Posterior cingulate gyrus (tissue), 11 donors: ENCODE measurements at regions of chr10 and their contacts with region 1.

Region 1: DNA sequence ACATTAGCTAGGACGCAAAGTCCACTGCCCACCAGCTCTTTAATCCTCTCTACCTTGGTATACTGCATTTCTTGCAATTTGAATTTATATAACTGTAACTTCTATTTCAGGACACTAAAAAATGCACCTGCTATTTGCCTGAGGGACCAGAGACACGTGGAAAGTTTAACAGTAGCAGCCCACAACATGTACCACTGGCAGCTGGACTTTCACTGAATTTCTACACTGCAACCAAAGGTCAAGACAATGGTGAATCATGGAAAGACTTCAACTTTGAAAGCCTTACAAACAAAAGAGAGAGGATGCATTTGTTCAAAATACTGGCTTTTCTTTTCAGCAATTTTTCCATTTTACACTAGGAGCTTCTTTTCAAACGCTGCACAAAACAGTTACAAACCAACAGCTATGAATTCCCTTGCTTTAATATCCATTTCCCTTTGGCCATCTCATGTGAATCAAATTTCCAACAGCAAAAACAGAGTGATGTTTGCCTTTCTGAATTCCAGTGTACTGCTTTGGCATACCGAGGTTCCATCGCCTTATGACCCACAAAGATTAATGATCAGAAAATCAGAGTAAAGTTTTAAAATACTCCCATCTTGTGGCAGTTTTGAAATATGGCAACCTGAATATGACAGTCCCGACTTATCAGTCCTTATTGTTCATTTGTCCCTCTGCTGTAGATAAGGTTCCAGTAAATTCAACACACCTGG is 29.9 kb upstream of the HNRNPH3 start:
- DNase-seq: no peak

Region 2: GRCh38 chr10:68082872-68083271 is 219.1 kb before region 1 on chr10:
- intact Hi-C with region 1: loop called (anchors 10 kb)
- DNase-seq: no peak

Region 3: GRCh38 chr10:68184546-68184945 is 117.4 kb before region 1 on chr10:
- intact Hi-C with region 1: no loop called
- DNase-seq: no peak

Region 4: DNA sequence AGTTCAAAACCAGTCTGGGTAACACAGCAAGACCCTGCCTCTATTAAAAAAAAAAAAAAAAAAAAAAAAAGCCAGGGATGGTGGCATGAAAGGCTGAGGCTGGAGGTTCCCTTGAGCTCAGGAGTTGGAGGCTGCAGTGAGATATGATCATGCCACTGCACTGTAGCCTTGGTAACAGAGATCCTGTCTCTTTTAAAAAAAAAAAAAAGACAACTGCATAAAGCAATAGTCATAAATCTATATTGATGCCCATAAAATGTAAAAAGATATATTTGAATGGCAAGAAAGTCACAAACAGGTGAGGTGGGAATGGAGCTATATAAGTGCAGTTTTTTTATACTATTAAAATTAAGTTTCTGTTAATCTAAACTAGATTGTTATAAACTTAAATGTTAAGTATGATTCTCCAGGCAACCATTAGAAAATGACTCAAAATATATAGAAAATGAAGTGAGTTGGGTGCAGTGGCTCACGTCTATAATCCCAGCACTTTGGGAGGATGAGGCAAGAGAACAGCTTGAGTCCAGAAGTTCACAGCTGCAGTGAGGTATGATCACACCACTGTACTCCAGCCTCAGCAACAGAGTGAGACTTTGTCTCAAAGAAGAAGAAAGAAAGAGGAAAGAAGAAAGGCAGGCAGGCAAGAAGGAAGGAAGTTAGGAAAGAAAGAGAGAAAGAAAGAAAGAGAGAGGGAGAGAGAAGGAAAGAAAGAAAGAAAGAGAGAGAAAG is 16.5 kb after region 1 on chr10:
- intact Hi-C with region 1: no loop called
- DNase-seq: no peak